ENCODE measurements at regions of chrX and their contacts with region 1.

Region 1: GRCh38 chrX:136616987-136617685 is 30.8 kb upstream of the CD40LG start:
- DNase-seq: peak; percentile 59
- ATAC-seq: peak; percentile 90
- H3K4me3 Mint-ChIP-seq: no peak overlapping the region
- H3K27ac Mint-ChIP-seq: peak overlapping the region; percentile 86
- H3K4me1 Mint-ChIP-seq: peaks cover 58% of the 10 kb centered on the region
- H3K27me3 Mint-ChIP-seq: no peaks in the 10 kb centered on the region

Region 2: DNA sequence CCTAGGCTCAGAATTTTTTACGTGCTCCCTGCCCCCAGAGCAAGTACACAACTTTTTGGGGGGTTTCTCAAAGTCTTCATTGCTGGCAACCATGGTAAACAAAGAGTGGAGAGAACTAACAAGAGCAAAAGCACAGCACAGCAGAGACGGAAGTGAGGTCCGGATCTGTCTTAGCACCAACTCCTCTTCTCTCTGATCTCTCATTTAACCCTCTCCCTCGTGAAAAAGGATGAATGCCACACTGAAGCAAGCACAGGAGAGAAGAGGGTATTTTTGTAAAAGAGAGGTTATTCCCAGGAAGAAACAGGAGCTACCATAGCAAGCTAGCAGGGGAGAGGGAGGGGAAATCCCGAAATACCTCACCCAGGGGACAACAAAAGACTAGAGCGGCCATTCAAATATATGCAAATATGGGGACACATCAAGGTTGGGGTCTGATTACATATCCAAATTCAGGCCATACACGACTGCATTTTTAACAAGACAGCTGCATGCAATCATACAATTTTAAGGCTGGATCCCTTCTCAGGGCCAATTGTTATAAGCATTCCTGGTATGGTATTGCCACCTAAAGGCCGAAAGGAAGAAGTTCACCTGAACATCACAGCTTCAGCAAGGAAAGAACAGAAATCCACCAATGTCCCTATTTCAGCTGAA is 77.4 kb after region 1 on chrX:
- CTCF ChIA-PET with region 1: interaction called, 13 read pairs
- DNase-seq: no peak
- ATAC-seq: peak; percentile 63
- H3K4me3 Mint-ChIP-seq: peak overlapping the region; percentile 34
- H3K27ac Mint-ChIP-seq: peak overlapping the region; percentile 94
- H3K4me1 Mint-ChIP-seq: peaks cover 76% of the 10 kb centered on the region
- H3K27me3 Mint-ChIP-seq: no peaks in the 10 kb centered on the region